Naive thymus-derived CD4-positive, alpha-beta T cell (primary cell): ENCODE measurements at regions of chr2 and their contacts with region 1.

Region 1: GRCh38 chr2:47360927-47361326 is 42.0 kb upstream of the MSH2 start:
- DNase-seq: no peak
- ATAC-seq: no peak
- H3K4me3 ChIP-seq: no peak overlapping the region
- H3K4me3 Mint-ChIP-seq: no peak overlapping the region
- H3K27ac ChIP-seq: no peak overlapping the region
- H3K27ac Mint-ChIP-seq: no peak overlapping the region
- H3K4me1 ChIP-seq: no peaks in the 10 kb centered on the region
- H3K4me1 Mint-ChIP-seq: no peaks in the 10 kb centered on the region
- H3K27me3 ChIP-seq: no peaks in the 10 kb centered on the region
- H3K27me3 Mint-ChIP-seq: peaks cover 0 to 9% (median 4%) of the 10 kb centered on the region in 5 donors

Region 2: DNA sequence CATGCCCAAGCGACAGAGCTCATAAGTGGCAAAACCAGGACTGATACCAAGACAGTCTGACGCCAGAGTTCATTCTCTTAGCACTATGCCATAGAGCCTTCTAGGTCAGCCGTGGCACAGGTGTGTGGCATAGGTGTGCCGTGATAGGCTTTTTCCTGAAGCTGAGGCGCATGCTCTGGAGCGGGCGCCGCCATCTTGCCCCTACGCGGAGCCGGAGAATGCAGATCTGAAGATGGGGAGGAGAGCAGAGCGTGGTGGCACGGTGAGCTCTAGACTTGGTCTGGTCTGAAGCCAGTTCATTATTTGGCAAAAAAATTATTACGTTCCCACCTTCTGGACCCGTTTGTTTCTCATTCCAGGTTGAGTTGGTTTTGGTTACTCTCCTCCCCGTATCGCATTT is 461.9 kb before region 1 on chr2:
- CTCF ChIA-PET with region 1: no interaction called
- POLR2A ChIA-PET with region 1: no interaction called
- intact Hi-C with region 1: no loop called
- DNase-seq: no peak
- ATAC-seq: no peak
- H3K4me3 ChIP-seq: no peak overlapping the region
- H3K4me3 Mint-ChIP-seq: no peak overlapping the region
- H3K27ac ChIP-seq: no peak overlapping the region
- H3K27ac Mint-ChIP-seq: no peak overlapping the region
- H3K4me1 ChIP-seq: no peaks in the 10 kb centered on the region
- H3K4me1 Mint-ChIP-seq: peaks cover 0 to 6% (median 0%) of the 10 kb centered on the region in 7 donors
- H3K27me3 ChIP-seq: no peaks in the 10 kb centered on the region
- H3K27me3 Mint-ChIP-seq: no peaks in the 10 kb centered on the region

Region 3: GRCh38 chr2:47293976-47294375 is 67.0 kb before region 1 on chr2:
- CTCF ChIA-PET with region 1: no interaction called
- POLR2A ChIA-PET with region 1: no interaction called
- intact Hi-C with region 1: loop called in 1 of 2 experiments (anchors 2 kb)
- DNase-seq: no peak
- ATAC-seq: no peak
- H3K4me3 ChIP-seq: no peak overlapping the region
- H3K4me3 Mint-ChIP-seq: no peak overlapping the region
- H3K27ac ChIP-seq: no peak overlapping the region
- H3K27ac Mint-ChIP-seq: no peak overlapping the region
- H3K4me1 ChIP-seq: no peaks in the 10 kb centered on the region
- H3K4me1 Mint-ChIP-seq: no peaks in the 10 kb centered on the region
- H3K27me3 ChIP-seq: no peaks in the 10 kb centered on the region
- H3K27me3 Mint-ChIP-seq: peaks cover 0 to 30% (median 0%) of the 10 kb centered on the region in 5 donors

Region 4: GRCh38 chr2:47437287-47437686 is 76.4 kb after region 1 on chr2:
- CTCF ChIA-PET with region 1: no interaction called
- POLR2A ChIA-PET with region 1: no interaction called
- intact Hi-C with region 1: no loop called
- DNase-seq: no peak
- ATAC-seq: no peak
- H3K4me3 ChIP-seq: no peak overlapping the region
- H3K4me3 Mint-ChIP-seq: no peak overlapping the region
- H3K27ac ChIP-seq: no peak overlapping the region
- H3K27ac Mint-ChIP-seq: no peak overlapping the region
- H3K4me1 ChIP-seq: no peaks in the 10 kb centered on the region
- H3K4me1 Mint-ChIP-seq: peaks cover 0 to 3% (median 0%) of the 10 kb centered on the region in 7 donors
- H3K27me3 ChIP-seq: no peaks in the 10 kb centered on the region
- H3K27me3 Mint-ChIP-seq: no peaks in the 10 kb centered on the region

Region 5: DNA sequence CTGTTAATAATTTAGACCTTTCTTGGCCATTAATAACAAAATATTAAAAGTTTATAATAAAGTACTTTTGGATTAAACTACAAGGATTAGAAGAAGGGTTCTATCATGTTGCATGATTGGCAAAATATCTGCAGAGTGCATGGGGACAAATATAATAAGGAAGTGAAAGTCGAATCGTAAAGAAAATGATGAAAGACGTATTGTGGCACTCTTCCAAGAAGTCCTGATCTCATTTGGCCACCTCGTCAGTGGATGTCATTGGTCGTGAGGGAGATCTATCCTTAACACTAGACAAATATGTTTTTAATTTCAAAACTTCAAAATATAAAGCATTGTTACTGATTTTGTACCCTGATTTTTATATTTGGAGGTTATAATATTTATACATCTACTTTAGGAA is 971.4 kb after region 1 on chr2:
- CTCF ChIA-PET with region 1: no interaction called
- POLR2A ChIA-PET with region 1: no interaction called
- intact Hi-C with region 1: no loop called
- DNase-seq: no peak
- ATAC-seq: peak; percentile 66
- H3K4me3 ChIP-seq: no peak overlapping the region
- H3K4me3 Mint-ChIP-seq: peak overlapping the region in 9 of 10 donors; percentile 14 to 69 (median 51)
- H3K27ac ChIP-seq: no peak overlapping the region
- H3K27ac Mint-ChIP-seq: peak overlapping the region in 6 of 9 donors; percentile 26 to 85 (median 41)
- H3K4me1 ChIP-seq: peaks cover 14 to 17% of the 10 kb centered on the region in 2 donors
- H3K4me1 Mint-ChIP-seq: peaks cover 38 to 84% (median 73%) of the 10 kb centered on the region in 7 donors
- H3K27me3 ChIP-seq: no peaks in the 10 kb centered on the region
- H3K27me3 Mint-ChIP-seq: no peaks in the 10 kb centered on the region